HEK293T (cell line): ENCODE measurements at regions of chr10 and their contacts with region 1.

Region 1: GRCh38 chr10:63720072-63720537 is 198.9 kb downstream of the REEP3 start:
- DNase-seq: peak; percentile 38

Region 2: DNA sequence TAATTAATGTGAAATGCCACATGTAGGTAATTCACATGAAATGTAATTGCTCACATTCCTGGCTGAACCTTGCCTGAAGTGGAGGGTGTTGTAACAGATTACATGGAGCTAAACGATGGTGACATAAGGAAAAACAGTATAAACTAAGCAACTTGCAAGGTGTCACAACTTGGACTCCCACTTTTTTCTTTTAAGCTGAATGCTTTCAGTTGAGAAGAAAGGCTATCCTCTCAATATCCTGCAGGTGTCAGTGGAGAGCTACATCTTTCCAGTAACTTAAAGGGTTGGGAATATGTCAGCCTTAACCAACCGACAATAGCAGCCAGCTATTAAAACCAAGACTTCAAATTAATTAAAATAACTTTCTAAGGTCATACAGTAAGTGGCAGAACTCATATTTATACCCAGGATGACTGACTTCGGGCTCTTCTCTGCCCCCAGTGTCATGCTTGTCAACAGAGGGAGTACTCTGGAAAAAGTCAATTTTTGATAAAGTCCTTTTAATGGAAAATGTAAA is 553.3 kb before region 1 on chr10:
- CTCF ChIA-PET with region 1: interaction called, 59 read pairs
- POLR2A ChIA-PET with region 1: no interaction called
- DNase-seq: peak; percentile 49

Region 3: GRCh38 chr10:63657761-63658160 is 62.3 kb before region 1 on chr10:
- CTCF ChIA-PET with region 1: no interaction called
- POLR2A ChIA-PET with region 1: no interaction called
- DNase-seq: no peak

Region 4: DNA sequence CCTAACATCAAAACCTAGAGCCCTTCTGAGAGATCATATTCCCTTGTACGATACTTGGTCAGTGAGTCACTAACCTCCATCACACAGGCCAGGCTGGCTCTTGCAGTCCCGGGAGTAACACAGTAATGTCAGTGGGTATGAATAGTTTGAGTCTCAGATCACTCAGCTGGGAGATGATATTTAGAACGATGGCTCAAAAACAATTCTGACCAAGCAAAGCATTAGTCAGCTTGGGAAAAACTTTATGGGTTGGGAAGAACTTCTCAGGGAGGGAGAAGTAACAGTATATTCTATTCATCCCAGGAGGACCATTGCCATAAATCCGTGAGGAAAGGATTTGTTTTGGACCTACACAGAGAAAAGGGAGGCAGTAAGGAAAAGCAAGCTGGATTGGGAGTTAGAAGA is 19.9 kb before region 1 on chr10:
- CTCF ChIA-PET with region 1: interaction called, 10 read pairs
- POLR2A ChIA-PET with region 1: interaction called, 3 read pairs
- DNase-seq: no peak

Region 5: DNA sequence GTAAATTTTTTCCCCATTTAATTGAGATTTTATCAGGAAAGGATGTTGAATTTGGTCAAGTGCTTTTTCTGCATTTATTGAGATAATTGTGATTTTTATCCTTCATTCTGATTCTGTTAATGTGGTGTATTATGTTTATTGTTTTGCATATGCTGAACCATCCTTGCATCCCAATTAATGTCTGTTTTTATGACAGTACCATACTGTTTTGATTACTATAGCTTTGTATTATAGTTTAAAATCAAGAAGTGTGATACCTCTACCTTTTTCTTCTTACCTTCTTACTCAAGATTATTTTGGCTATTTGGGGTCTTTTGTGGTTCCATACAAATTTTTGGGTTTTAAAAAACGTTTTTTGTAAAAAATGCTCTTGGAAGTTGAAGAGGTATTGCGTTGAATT is 158.3 kb after region 1 on chr10:
- CTCF ChIA-PET with region 1: no interaction called
- POLR2A ChIA-PET with region 1: no interaction called
- DNase-seq: no peak